ENCODE measurements at regions of chr20 and their contacts with region 1.

Region 1: GRCh38 chr20:60057123-60057801 is 99.0 kb downstream of the CDH26 start:
- DNase-seq: peak; percentile 81
- ATAC-seq: peak; percentile 69

Region 2: GRCh38 chr20:59006864-59007664 is 1050.2 kb before region 1 on chr20 and contains the start of gene CTSZ:
- intact Hi-C with region 1: no loop called
- DNase-seq: peak; percentile 73
- ATAC-seq: peak; percentile 67
- total RNA-seq, gene CTSZ: 151 TPM

Region 3: DNA sequence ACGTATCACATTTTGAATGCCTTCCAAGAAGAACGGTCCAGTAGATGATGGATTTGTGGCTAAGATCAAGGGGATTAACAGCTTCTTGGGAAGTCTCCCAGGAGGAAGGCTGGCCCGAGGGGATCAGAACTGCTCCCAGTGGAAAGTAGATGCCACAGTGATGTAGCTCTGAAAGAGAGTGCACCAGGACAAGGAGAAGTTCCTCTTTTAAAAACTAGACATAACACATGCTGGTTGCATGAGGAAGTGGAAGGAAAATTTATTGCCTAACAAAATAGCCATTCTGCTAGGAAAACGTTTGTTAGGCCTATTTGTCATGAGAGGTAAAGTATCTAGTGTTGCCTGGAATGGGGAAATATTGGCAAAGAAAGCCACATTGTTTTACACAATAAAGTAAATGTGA is 11.2 kb before region 1 on chr20:
- intact Hi-C with region 1: no loop called
- DNase-seq: no peak
- ATAC-seq: peak; percentile 20

Region 4: DNA sequence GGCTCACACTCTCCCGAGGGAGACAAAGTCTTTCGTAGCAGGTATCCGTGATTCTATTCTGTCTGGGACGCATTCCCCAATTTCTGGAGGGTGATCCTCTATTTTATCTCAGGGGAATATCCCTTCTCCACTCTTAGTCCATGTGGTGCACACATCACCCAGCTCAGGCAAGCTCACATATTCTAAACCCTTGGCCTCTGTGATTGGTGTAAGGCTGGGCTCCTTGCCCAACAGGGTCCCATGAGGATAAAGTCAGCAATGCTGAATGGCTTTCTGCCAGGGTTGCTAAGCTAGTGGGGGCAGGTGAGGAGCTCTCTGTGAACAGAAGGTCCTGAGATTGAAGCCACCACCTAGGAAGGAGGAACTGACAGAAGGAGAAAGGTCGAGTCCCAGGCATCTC is 38.2 kb after region 1 on chr20:
- intact Hi-C with region 1: no loop called
- DNase-seq: no peak
- ATAC-seq: peak; percentile 46

Region 5: GRCh38 chr20:61220160-61220559 is 1162.9 kb after region 1 on chr20:
- intact Hi-C with region 1: loop called (anchors 10 kb)
- DNase-seq: no peak
- ATAC-seq: no peak

Measured in sciatic nerve (tissue), 2 donors.